Naive thymus-derived CD4-positive, alpha-beta T cell (primary cell): ENCODE measurements at regions of chr2 and their contacts with region 1.

Region 1: GRCh38 chr2:54618646-54619565 is 104.6 kb upstream of the EML6 start:
- DNase-seq: peak in 1 of 9 donors; percentile 32
- ATAC-seq: no peak
- H3K4me3 ChIP-seq: no peak overlapping the region
- H3K4me3 Mint-ChIP-seq: peak overlapping the region in 8 of 10 donors; percentile 8 to 76 (median 47)
- H3K27ac ChIP-seq: peak overlapping the region; percentile 25
- H3K27ac Mint-ChIP-seq: peak overlapping the region; percentile 25 to 88 (median 79)
- H3K4me1 ChIP-seq: peaks cover 0 to 11% of the 10 kb centered on the region in 2 donors
- H3K4me1 Mint-ChIP-seq: peaks cover 19 to 65% (median 45%) of the 10 kb centered on the region in 7 donors
- H3K27me3 ChIP-seq: no peaks in the 10 kb centered on the region
- H3K27me3 Mint-ChIP-seq: no peaks in the 10 kb centered on the region

Region 2: DNA sequence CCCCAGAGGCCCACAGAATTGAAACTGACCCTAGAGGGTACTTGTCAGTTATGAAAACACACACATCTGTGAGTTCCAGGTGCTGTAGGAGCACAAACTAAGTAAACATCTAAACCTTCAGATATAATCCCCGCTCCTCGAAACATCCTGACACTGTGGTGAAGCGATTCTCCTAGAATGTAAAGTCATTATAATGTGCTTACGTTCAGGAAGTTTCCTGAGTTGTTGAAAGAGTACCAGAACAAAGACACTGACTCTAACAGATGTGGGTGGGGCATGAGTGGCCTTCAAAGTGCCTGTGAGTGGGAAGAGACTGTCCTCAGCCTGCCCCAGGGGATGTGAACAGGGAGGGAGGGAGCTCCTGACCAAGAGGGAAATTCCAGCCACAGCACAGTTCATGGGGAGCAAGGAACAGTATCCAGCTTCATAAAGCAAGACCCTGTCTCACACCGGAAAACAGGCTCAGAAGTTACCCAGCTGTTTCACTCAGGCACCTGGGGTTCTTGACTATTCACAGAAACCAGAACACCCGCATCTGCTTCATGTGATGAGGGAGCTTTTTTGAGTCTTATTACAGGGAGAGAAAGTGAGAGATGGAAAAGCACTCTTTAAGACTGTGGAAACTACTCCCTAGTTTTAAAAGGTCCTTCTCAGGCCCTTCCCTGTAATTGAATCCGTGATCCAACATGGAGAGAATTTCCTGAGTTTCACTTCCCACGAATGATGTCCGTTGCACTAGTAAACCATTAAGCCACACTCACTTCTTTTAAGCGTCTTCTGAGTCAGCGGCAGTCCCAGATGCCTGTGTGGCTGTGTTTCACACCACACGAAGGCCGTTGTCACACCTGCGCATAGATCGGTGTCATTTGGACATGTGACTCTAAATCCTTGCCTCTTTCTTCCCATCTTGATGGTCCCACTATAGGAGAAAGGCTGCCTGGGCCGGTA is 15.9 kb after region 1 on chr2:
- CTCF ChIA-PET with region 1: interaction called, 4 read pairs
- POLR2A ChIA-PET with region 1: interaction called, 3 read pairs
- intact Hi-C with region 1: loop called in 1 of 2 experiments (anchors 2 kb)
- DNase-seq: peak in 7 of 9 donors; percentile 20 to 55 (median 43)
- ATAC-seq: peak; percentile 84
- H3K4me3 ChIP-seq: no peak overlapping the region
- H3K4me3 Mint-ChIP-seq: peak overlapping the region; percentile 3 to 63 (median 48)
- H3K27ac ChIP-seq: peak overlapping the region; percentile 45
- H3K27ac Mint-ChIP-seq: peak overlapping the region; percentile 74 to 93 (median 88)
- H3K4me1 ChIP-seq: peaks cover 0 to 16% of the 10 kb centered on the region in 2 donors
- H3K4me1 Mint-ChIP-seq: peaks cover 25 to 76% (median 57%) of the 10 kb centered on the region in 7 donors
- H3K27me3 ChIP-seq: no peaks in the 10 kb centered on the region
- H3K27me3 Mint-ChIP-seq: no peaks in the 10 kb centered on the region

Region 3: DNA sequence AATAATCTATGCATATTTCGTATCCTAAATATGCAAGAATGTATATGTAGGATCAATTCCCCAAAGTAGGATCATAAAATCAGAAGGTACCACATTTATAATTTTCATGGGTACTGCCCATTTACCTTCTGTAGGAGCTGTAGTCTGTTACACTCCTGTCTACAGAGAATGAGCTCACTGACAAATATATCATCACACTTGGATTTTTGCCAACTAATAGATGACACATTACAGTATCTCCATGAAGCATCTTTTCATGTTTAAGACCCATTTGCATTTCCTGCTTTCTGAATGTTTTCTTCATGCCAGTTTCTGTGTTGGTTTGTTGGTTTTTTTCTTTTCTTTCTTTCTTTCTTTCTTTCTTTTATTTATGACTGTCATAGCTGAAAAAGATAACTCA is 33.6 kb after region 1 on chr2:
- CTCF ChIA-PET with region 1: no interaction called
- POLR2A ChIA-PET with region 1: no interaction called
- intact Hi-C with region 1: loop called in 1 of 2 experiments (anchors 5 kb)
- DNase-seq: no peak
- ATAC-seq: no peak
- H3K4me3 ChIP-seq: no peak overlapping the region
- H3K4me3 Mint-ChIP-seq: no peak overlapping the region
- H3K27ac ChIP-seq: no peak overlapping the region
- H3K27ac Mint-ChIP-seq: peak overlapping the region in 4 of 9 donors; percentile 25 to 55 (median 39)
- H3K4me1 ChIP-seq: no peaks in the 10 kb centered on the region
- H3K4me1 Mint-ChIP-seq: peaks cover 0 to 19% (median 6%) of the 10 kb centered on the region in 7 donors
- H3K27me3 ChIP-seq: no peaks in the 10 kb centered on the region
- H3K27me3 Mint-ChIP-seq: no peaks in the 10 kb centered on the region